Vagina (tissue), 2 donors: ENCODE measurements at regions of chrX and their contacts with region 1.

Region 1: GRCh38 chrX:85627363-85627762 is 247.9 kb upstream of the POF1B start:
- DNase-seq: no peak
- H3K4me3 ChIP-seq: no peak overlapping the region
- H3K27ac ChIP-seq: no peak overlapping the region
- H3K4me1 ChIP-seq: no peaks in the 10 kb centered on the region
- H3K27me3 ChIP-seq: no peaks in the 10 kb centered on the region
- CTCF ChIP-seq: no peak
- POLR2A ChIP-seq: no peak

Region 2: DNA sequence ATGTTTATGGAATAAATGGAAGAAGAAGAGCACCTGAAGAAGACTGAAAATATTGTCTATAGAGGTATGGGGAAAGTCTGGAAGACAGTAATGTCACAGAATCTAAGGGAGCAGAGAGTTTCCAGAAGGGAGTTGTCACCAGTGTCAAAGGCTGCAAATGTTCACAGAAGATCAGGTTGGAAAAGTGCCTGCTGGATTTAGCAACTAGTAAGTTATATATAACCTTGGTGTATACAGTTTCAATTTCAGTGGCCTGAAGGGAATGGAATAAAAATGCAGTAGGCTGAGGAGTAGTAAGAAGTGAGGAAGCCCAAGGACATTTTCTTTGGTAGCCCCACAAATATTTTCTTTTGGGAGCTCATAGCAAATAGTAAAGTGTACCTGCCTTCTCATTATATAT is 491.0 kb before region 1 on chrX:
- intact Hi-C with region 1: loop called (anchors 5 kb)
- DNase-seq: no peak
- H3K4me3 ChIP-seq: no peak overlapping the region
- H3K27ac ChIP-seq: no peak overlapping the region
- H3K4me1 ChIP-seq: no peaks in the 10 kb centered on the region
- H3K27me3 ChIP-seq: no peaks in the 10 kb centered on the region
- CTCF ChIP-seq: no peak
- POLR2A ChIP-seq: no peak